ENCODE measurements at regions of chr16 and their contacts with region 1.

Region 1: GRCh38 chr16:13453938-13454553 is 465.9 kb upstream of the ERCC4 start:
- DNase-seq: no peak
- ATAC-seq: no peak
- H3K4me3 ChIP-seq: no peak overlapping the region
- H3K27ac ChIP-seq: no peak overlapping the region
- H3K4me1 ChIP-seq: no peaks in the 10 kb centered on the region
- H3K27me3 ChIP-seq: peaks cover 5% of the 10 kb centered on the region; the same call in 1 of the 2 replicates
- CTCF ChIP-seq: peak; percentile 70

Region 2: DNA sequence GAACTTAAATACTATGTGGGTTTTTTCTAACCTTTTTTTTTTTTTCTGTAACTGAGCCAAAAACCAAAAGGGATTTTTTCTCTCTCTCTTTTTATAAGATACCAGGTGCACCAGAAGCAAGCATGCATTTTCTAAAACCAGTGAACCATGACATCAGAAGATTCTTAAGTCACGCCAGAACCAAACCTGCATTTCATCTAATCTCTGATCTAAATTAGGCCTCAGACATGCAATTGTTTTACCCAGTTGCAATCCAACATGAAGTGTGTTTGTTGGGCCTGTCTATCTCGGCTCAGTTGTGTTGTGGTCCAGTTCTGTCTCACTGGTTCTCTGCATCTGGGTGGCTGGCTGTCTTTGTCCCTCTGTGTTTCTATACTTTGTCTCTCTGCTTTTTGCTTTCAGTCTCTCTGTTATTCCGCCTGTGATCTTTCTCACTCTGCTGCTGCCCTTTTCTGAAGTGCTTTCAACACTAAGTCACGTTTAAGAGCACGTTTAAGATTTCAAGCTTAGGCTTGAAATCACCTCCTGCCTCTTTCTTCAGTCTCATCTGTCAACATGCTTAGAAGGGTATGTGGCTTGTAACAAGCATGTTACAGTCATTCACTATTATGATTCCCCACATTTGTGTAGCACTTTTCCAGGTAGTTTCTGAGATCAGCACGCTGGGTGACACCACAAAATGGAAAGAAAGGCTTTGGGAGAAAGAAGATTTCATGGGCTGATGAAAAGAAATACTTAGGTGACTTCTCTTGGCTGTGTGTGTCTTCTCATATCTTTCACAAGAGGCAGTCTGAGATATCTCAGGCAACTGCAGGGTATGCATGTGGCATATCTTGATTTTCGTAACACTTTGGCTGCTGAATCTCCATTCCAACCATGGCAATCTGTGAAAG is 63.7 kb before region 1 on chr16:
- CTCF ChIA-PET with region 1: no interaction called
- POLR2A ChIA-PET with region 1: no interaction called
- in situ Hi-C with region 1: no loop called
- intact Hi-C with region 1: loop called (anchors 2 kb)
- DNase-seq: no peak
- ATAC-seq: no peak
- H3K4me3 ChIP-seq: no peak overlapping the region
- H3K27ac ChIP-seq: no peak overlapping the region
- H3K4me1 ChIP-seq: no peaks in the 10 kb centered on the region
- H3K27me3 ChIP-seq: no peaks in the 10 kb centered on the region
- CTCF ChIP-seq: no peak